B cell (primary cell): ENCODE measurements at regions of chr1 and their contacts with region 1.

Region 1: GRCh38 chr1:21244986-21245687 is 45.1 kb downstream of the ECE1 start:
- DNase-seq: no peak
- ATAC-seq: no peak
- H3K4me3 ChIP-seq: no peak overlapping the region
- H3K4me3 Mint-ChIP-seq: no peak overlapping the region
- H3K27ac ChIP-seq: no peak overlapping the region
- H3K27ac Mint-ChIP-seq: no peak overlapping the region
- H3K4me1 ChIP-seq: no peaks in the 10 kb centered on the region
- H3K4me1 Mint-ChIP-seq: no peaks in the 10 kb centered on the region
- H3K27me3 ChIP-seq: no peaks in the 10 kb centered on the region
- H3K27me3 Mint-ChIP-seq: no peaks in the 10 kb centered on the region
- CTCF ChIP-seq: peak; percentile 49

Region 2: GRCh38 chr1:21176586-21177555 is 68.3 kb before region 1 on chr1 and contains the start of gene EIF4G3:
- CTCF ChIA-PET with region 1: no interaction called
- POLR2A ChIA-PET with region 1: no interaction called
- intact Hi-C with region 1: no loop called
- DNase-seq: peak; percentile 99
- ATAC-seq: peak; percentile 93
- H3K4me3 ChIP-seq: peak within 1 kb of the TSS; percentile 76 to 96 (median 83)
- H3K4me3 Mint-ChIP-seq: peak within 1 kb of the TSS; percentile 97
- H3K27ac ChIP-seq: peak within 1 kb of the TSS; percentile 73 to 89
- H3K27ac Mint-ChIP-seq: peak within 1 kb of the TSS; percentile 96
- H3K4me1 ChIP-seq: peaks cover 16 to 23% of the 10 kb centered on the region in 2 donors
- H3K4me1 Mint-ChIP-seq: peaks cover 29% of the 10 kb centered on the region
- H3K27me3 ChIP-seq: no peaks in the 10 kb centered on the region
- H3K27me3 Mint-ChIP-seq: no peaks in the 10 kb centered on the region
- CTCF ChIP-seq: no peak
- total RNA-seq, gene EIF4G3: 76.0 and 80.9 TPM in 2 replicates

Region 3: GRCh38 chr1:21232044-21232443 is 13.1 kb before region 1 on chr1:
- CTCF ChIA-PET with region 1: interaction called, 38 read pairs
- POLR2A ChIA-PET with region 1: no interaction called
- intact Hi-C with region 1: no loop called
- DNase-seq: peak; percentile 66
- ATAC-seq: peak; percentile 66
- H3K4me3 ChIP-seq: no peak overlapping the region
- H3K4me3 Mint-ChIP-seq: no peak overlapping the region
- H3K27ac ChIP-seq: no peak overlapping the region
- H3K27ac Mint-ChIP-seq: no peak overlapping the region
- H3K4me1 ChIP-seq: no peaks in the 10 kb centered on the region
- H3K4me1 Mint-ChIP-seq: no peaks in the 10 kb centered on the region
- H3K27me3 ChIP-seq: no peaks in the 10 kb centered on the region
- H3K27me3 Mint-ChIP-seq: no peaks in the 10 kb centered on the region
- CTCF ChIP-seq: peak; percentile 97

Region 4: GRCh38 chr1:21278208-21278859 is 33.2 kb after region 1 on chr1:
- CTCF ChIA-PET with region 1: no interaction called
- POLR2A ChIA-PET with region 1: no interaction called
- intact Hi-C with region 1: no loop called
- DNase-seq: no peak
- ATAC-seq: no peak
- H3K4me3 ChIP-seq: no peak overlapping the region
- H3K4me3 Mint-ChIP-seq: no peak overlapping the region
- H3K27ac ChIP-seq: no peak overlapping the region
- H3K27ac Mint-ChIP-seq: peak overlapping the region; percentile 41
- H3K4me1 ChIP-seq: peaks cover 16 to 18% of the 10 kb centered on the region in 2 donors
- H3K4me1 Mint-ChIP-seq: peaks cover 25% of the 10 kb centered on the region
- H3K27me3 ChIP-seq: no peaks in the 10 kb centered on the region
- H3K27me3 Mint-ChIP-seq: no peaks in the 10 kb centered on the region
- CTCF ChIP-seq: no peak

Region 5: DNA sequence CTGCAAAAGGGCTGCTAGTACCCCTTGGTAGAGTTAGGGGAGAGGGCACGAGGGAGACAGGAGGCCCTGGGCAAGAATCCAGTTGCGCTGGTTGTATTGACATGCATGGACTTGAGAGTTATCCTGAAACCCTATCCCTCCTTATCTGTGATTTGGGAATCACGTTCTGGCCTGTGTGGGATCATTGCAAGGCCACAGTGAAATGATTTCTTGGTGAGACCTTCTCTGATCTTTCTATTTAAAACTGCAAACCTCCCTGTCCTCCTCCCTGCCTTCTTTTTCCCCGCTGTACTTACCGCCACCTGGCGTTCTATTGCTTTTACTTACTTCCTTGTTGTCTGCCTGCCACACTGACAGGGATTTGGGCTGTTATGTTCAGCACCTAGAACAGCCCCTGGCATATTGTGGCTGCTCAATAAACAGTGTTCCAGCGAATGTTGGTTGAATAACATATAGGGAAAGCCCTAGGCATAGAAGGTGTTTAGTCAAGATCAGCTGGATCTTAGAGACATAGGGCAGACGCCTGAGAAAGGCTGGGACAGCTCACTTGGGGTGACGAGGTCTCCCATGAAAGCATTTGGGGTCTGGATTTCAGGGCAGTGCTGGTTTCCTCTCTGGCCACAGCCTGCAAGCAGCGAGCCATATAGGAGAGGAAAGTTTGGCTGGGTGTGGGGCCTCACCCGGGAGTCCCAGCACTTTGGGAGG is 289.7 kb after region 1 on chr1:
- CTCF ChIA-PET with region 1: no interaction called
- POLR2A ChIA-PET with region 1: interaction called, 12 read pairs
- intact Hi-C with region 1: no loop called
- DNase-seq: peak; percentile 77
- ATAC-seq: peak; percentile 78
- H3K4me3 ChIP-seq: no peak overlapping the region
- H3K4me3 Mint-ChIP-seq: no peak overlapping the region
- H3K27ac ChIP-seq: no peak overlapping the region
- H3K27ac Mint-ChIP-seq: no peak overlapping the region
- H3K4me1 ChIP-seq: peaks cover 0 to 10% of the 10 kb centered on the region in 2 donors
- H3K4me1 Mint-ChIP-seq: peaks cover 5% of the 10 kb centered on the region
- H3K27me3 ChIP-seq: peaks cover 0 to 9% (median 4%) of the 10 kb centered on the region in 4 experiments
- H3K27me3 Mint-ChIP-seq: peaks cover 23% of the 10 kb centered on the region
- CTCF ChIP-seq: peak; percentile 65

Region 6: GRCh38 chr1:21680918-21681317 is 435.8 kb after region 1 on chr1:
- CTCF ChIA-PET with region 1: no interaction called
- POLR2A ChIA-PET with region 1: no interaction called
- intact Hi-C with region 1: no loop called
- DNase-seq: no peak
- ATAC-seq: no peak
- H3K4me3 ChIP-seq: no peak overlapping the region
- H3K4me3 Mint-ChIP-seq: no peak overlapping the region
- H3K27ac ChIP-seq: no peak overlapping the region
- H3K27ac Mint-ChIP-seq: no peak overlapping the region
- H3K4me1 ChIP-seq: no peaks in the 10 kb centered on the region
- H3K4me1 Mint-ChIP-seq: peaks cover 8% of the 10 kb centered on the region
- H3K27me3 ChIP-seq: no peaks in the 10 kb centered on the region
- H3K27me3 Mint-ChIP-seq: no peaks in the 10 kb centered on the region
- CTCF ChIP-seq: no peak